ENCODE measurements at regions of chr1 and their contacts with region 1.

Region 1: DNA sequence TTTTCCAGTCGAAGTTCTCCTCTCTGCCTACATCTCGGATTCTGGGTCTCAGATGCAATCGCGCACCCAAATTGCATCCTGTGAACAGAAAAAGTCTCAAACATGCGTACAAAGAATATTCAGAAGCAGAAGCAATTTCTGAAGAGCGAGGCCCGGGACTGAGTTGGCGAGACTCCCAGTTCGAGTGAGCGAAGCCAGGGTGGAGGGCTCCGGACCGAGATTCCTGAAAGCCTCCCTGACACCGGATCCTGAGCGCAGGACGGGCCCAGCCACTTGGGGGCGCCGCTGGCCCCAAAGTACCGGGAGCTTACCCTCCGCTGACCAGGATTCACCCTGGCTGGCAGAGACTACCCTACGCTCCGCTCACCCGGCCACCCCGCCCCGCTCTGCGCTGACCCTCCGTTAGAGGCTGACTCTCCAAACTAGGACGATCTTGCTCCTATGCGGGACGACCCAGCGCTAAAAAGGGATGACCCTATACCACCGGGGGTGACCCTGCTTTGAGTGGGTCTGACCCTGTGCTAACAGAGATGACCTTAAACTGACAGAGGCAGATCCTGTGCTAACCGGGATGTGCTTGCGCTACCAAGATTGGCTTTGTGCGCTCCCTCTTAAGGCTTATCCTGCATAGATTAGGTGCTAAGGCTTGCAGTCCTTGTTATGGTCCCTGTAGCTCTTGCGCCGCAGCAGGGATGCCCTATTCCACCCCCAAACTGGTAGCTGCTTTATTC is 12.1 kb downstream of the FOXD2 start:
- DNase-seq: peak in 3 of 5 donors; percentile 31 to 70 (median 50)
- ATAC-seq: peak in 3 of 4 donors; percentile 59 to 77 (median 70)
- H3K4me3 ChIP-seq: no peak overlapping the region
- H3K27ac ChIP-seq: no peak overlapping the region
- H3K4me1 ChIP-seq: peaks cover 0 to 11% (median 2%) of the 10 kb centered on the region in 12 donors
- H3K27me3 ChIP-seq: peaks cover 35 to 100% (median 78%) of the 10 kb centered on the region in 9 donors
- CTCF ChIP-seq: peak in 11 of 12 donors; percentile 26 to 58 (median 45)
- POLR2A ChIP-seq: no peak

Region 2: DNA sequence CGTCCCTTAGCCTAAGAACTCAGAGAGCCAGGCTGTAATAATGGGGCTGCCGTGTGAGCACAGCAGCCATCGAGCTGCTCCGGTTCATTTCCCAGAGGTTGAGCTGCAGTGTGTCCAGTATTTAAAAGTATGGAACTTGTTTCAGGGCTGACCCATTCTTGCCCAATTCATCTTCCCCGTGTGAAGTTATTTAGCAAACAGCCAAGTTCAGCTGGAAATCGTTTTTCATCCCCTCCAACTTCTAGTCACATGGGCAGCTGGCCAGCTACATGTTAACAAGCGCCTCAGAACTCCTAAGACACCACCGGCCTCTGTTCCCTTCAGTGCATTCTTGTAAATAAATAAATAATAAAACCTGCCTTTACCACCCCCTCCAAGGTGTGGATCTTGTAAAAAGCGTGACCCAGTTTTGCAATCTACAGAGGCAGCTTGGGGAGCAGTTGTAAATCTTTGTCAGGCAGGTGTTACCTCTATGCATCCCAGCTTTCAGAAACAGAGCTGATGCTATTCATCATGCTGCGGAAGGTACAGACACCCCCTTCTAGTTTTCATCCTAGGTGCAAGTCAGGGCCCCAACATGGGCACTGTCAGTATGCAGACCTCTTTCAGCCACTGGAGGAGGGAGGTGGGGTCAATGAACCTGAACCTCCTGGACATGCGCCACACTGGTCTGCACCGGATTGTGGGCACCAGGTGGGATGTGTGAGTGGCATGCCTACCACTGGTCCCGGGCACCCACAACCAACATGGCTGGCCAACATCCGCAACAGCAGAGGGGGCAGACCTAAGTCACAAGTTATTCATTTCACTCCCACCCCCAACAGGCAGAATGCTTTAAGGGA is 879.9 kb before region 1 on chr1:
- intact Hi-C with region 1: no loop called
- DNase-seq: no peak
- ATAC-seq: no peak
- H3K4me3 ChIP-seq: no peak overlapping the region
- H3K27ac ChIP-seq: no peak overlapping the region
- H3K4me1 ChIP-seq: peaks cover 0 to 22% (median 11%) of the 10 kb centered on the region in 12 donors
- H3K27me3 ChIP-seq: no peaks in the 10 kb centered on the region
- CTCF ChIP-seq: no peak
- POLR2A ChIP-seq: no peak

Region 3: GRCh38 chr1:47521034-47521881 is 71.3 kb after region 1 on chr1:
- intact Hi-C with region 1: loop called in 1 of 10 experiments (anchors 5 kb)
- DNase-seq: no peak
- ATAC-seq: peak in 3 of 4 donors; percentile 9 to 38 (median 38)
- H3K4me3 ChIP-seq: no peak overlapping the region
- H3K27ac ChIP-seq: no peak overlapping the region
- H3K4me1 ChIP-seq: peaks cover 0 to 9% (median 0%) of the 10 kb centered on the region in 12 donors
- H3K27me3 ChIP-seq: peaks cover 0 to 19% (median 7%) of the 10 kb centered on the region in 9 donors
- CTCF ChIP-seq: no peak
- POLR2A ChIP-seq: no peak

Measured in heart left ventricle (tissue), 16 donors.